PC-3 (cell line): ENCODE measurements at regions of chr1 and their contacts with region 1.

Region 1: GRCh38 chr1:165073185-165074007 is 283.1 kb downstream of the LMX1A start:
- DNase-seq: peak; percentile 79
- ATAC-seq: peak; percentile 68
- H3K4me3 ChIP-seq: no peak overlapping the region
- H3K27ac ChIP-seq: no peak overlapping the region
- H3K4me1 ChIP-seq: no peaks in the 10 kb centered on the region
- H3K27me3 ChIP-seq: peaks cover 25% of the 10 kb centered on the region
- CTCF ChIP-seq: peak; percentile 77

Region 2: GRCh38 chr1:163361123-163361934 is 1712.1 kb before region 1 on chr1:
- CTCF ChIA-PET with region 1: interaction called, 3 read pairs
- POLR2A ChIA-PET with region 1: no interaction called
- intact Hi-C with region 1: loop called (anchors 1 kb)
- DNase-seq: peak; percentile 60
- ATAC-seq: peak; percentile 83
- H3K4me3 ChIP-seq: no peak overlapping the region
- H3K27ac ChIP-seq: no peak overlapping the region
- H3K4me1 ChIP-seq: no peaks in the 10 kb centered on the region
- H3K27me3 ChIP-seq: peaks cover 8% of the 10 kb centered on the region
- CTCF ChIP-seq: peak; percentile 82

Region 3: GRCh38 chr1:163528710-163529348 is 1544.6 kb before region 1 on chr1:
- CTCF ChIA-PET with region 1: no interaction called
- POLR2A ChIA-PET with region 1: no interaction called
- intact Hi-C with region 1: loop called (anchors 1 kb)
- DNase-seq: peak; percentile 67
- ATAC-seq: peak; percentile 70
- H3K4me3 ChIP-seq: no peak overlapping the region
- H3K27ac ChIP-seq: no peak overlapping the region
- H3K4me1 ChIP-seq: no peaks in the 10 kb centered on the region
- H3K27me3 ChIP-seq: peaks cover 27% of the 10 kb centered on the region
- CTCF ChIP-seq: peak; percentile 72

Region 4: DNA sequence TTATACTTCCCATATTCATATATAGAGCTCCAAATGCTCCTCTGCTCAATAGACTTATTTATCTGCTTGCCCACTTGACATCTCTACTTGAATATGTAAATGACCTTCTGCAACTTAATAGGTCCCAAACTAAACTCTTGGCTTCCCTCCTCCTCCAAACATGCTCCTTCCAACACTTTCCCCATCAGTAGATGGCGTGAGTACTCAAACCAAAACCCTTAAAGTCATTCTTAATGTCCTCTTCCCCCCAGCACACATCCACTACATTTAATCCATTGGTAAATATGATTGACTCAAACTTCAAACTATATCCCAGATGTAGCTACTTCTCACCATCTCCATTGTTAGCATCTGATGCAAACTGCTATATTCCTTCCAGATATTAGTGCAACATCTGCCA is 563.0 kb before region 1 on chr1:
- CTCF ChIA-PET with region 1: no interaction called
- POLR2A ChIA-PET with region 1: no interaction called
- intact Hi-C with region 1: loop called (anchors 2 kb)
- DNase-seq: peak; percentile 44
- ATAC-seq: peak; percentile 78
- H3K4me3 ChIP-seq: no peak overlapping the region
- H3K27ac ChIP-seq: no peak overlapping the region
- H3K4me1 ChIP-seq: no peaks in the 10 kb centered on the region
- H3K27me3 ChIP-seq: peaks cover 69% of the 10 kb centered on the region
- CTCF ChIP-seq: peak; percentile 53

Region 5: DNA sequence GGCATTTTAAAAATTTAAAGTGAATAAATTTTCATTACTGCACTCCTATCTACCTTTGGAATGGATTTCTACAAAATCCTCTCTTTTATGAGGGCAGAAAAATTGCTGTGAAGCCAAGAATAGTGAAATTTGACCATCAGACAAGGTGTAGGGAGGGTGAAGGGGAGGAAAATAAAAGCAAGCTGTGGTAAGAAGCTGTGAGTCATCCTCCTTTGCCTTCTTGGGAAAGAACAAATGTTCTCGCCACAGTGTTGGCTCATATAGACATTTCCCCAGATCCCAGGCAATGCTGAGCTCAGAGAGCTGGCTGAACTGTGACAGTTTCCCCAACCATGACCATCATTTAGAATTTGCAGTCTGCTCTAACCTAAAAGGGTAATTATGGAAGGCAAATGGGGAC is 279.1 kb before region 1 on chr1:
- CTCF ChIA-PET with region 1: interaction called, 4 read pairs
- POLR2A ChIA-PET with region 1: no interaction called
- intact Hi-C with region 1: loop called (anchors 2 kb)
- DNase-seq: peak; percentile 90
- ATAC-seq: peak; percentile 100
- H3K4me3 ChIP-seq: no peak overlapping the region
- H3K27ac ChIP-seq: no peak overlapping the region
- H3K4me1 ChIP-seq: peaks cover 14% of the 10 kb centered on the region
- H3K27me3 ChIP-seq: no peaks in the 10 kb centered on the region
- CTCF ChIP-seq: no peak

Region 6: DNA sequence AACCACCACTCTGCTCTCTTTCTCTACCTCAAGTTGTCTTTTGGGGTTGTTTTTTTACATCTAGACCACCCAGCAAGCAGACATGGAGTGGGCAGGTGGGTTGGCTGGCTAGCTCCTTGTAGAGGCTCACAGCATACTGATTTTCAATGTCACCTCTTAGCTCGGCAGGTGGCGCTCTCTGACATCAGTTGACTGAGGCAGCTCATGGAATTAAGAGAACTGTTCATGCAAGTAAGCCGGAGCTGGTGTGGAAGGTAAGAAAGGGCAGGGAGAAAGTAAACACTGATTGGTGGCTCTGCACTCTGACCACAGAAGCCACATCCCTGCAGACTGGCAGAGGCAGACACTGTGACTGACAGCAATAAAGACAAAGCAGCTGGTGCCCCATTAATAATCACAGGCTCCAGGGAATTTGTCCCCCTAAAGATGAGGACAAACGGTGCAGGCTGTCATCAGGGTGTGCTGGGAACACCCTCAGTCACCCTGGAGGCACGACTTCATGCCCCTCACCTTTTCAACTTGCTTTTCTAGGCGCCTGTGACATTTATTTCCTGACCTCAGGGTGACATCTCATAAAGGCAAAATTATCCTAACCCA is 56.3 kb after region 1 on chr1:
- CTCF ChIA-PET with region 1: no interaction called
- POLR2A ChIA-PET with region 1: no interaction called
- intact Hi-C with region 1: no loop called
- DNase-seq: peak; percentile 88
- ATAC-seq: peak; percentile 88
- H3K4me3 ChIP-seq: no peak overlapping the region
- H3K27ac ChIP-seq: no peak overlapping the region
- H3K4me1 ChIP-seq: peaks cover 5% of the 10 kb centered on the region; the same call in 1 of the 2 replicates
- H3K27me3 ChIP-seq: peaks cover 62% of the 10 kb centered on the region
- CTCF ChIP-seq: peak; percentile 93

Region 7: DNA sequence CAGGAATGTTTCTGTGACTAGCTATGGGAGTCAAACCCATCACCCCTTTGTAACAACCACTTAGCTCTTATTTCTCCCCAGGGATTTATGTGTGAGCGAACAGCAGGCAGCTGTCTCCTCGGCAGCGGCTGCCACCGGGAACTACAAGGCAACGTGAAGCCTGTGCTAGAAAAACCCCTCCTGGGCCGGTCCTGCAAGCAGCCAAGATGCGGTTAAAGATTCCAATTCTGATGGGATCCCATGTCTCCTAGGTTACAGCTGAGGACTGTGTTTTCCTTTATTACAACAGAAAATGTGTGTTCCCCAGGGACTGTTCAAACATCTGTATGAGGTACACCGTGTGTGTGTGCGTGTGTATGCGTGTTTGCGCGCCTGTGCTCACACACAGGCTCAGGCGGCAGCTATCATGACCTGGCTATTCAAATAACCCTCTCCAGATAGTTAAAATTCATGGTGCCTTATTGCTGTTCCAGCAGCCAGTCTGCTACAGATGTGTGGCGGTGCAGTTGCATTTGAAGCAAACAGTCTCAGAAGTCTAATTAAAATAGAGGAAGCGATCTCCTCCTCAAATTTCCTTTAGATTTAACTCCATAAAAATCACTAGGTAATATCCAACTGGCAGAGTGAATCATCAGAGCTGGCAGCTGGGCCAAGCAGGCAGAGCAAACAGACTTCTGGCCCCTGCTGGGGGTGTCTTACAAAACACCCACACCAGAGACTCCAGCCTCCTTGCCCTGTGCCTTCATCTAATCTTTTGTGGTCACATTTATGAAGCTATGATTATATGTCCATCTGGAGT is 215.2 kb after region 1 on chr1:
- CTCF ChIA-PET with region 1: no interaction called
- POLR2A ChIA-PET with region 1: no interaction called
- intact Hi-C with region 1: no loop called
- DNase-seq: peak; percentile 79
- ATAC-seq: peak; percentile 81
- H3K4me3 ChIP-seq: no peak overlapping the region
- H3K27ac ChIP-seq: no peak overlapping the region
- H3K4me1 ChIP-seq: peaks cover 16% of the 10 kb centered on the region
- H3K27me3 ChIP-seq: peaks cover 24% of the 10 kb centered on the region
- CTCF ChIP-seq: peak; percentile 23; the same call in 1 of the 2 replicates